Dorsolateral prefrontal cortex (tissue), 120 donors: ENCODE measurements at regions of chrX and their contacts with region 1.

Region 1: DNA sequence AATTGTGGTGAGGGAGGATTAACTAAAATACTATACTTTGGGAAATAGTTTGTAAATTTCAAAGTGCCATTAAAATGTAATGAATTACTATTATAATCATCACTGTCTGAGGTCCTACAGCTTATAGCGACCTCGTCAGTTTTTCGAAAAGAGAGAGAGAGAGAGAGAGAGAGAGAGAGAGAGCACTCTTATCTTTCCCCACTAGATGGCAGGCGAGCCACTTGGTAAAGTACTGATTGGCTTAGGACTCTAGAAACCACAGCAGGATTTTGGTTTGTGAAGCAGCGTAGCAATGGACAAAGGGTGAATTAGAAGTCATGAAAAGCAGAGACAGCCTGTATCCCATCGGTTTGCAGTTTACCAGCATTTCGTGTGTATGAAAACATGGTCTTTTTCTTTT is 52.5 kb downstream of the LINC00632 start:
- DNase-seq: peak in 4 of 10 donors; percentile 39 to 64 (median 52)
- H3K4me3 ChIP-seq: peak overlapping the region in 3 of 59 donors; percentile 8 to 26 (median 17)
- H3K27ac ChIP-seq: peak overlapping the region in 20 of 59 donors; percentile 1 to 73 (median 32)
- H3K27me3 ChIP-seq: peaks cover 0 to 67% (median 17%) of the 10 kb centered on the region in 45 donors
- CTCF ChIP-seq: peak; percentile 17 to 83 (median 70)

Region 2: GRCh38 chrX:140848800-140849199 is 86.7 kb after region 1 on chrX:
- intact Hi-C with region 1: no loop called
- DNase-seq: no peak
- H3K4me3 ChIP-seq: no peak overlapping the region
- H3K27ac ChIP-seq: no peak overlapping the region
- H3K27me3 ChIP-seq: peaks cover 0 to 54% (median 15%) of the 10 kb centered on the region in 45 donors
- CTCF ChIP-seq: no peak

Region 3: GRCh38 chrX:141176586-141177451 is 414.8 kb after region 1 on chrX and contains the start of gene LDOC1:
- intact Hi-C with region 1: loop called in 1 of 2 experiments (anchors 10 kb)
- DNase-seq: peak; percentile 71 to 86 (median 80)
- H3K4me3 ChIP-seq: peak within 1 kb of the TSS; percentile 41 to 83 (median 68)
- H3K27ac ChIP-seq: peak within 1 kb of the TSS in 53 of 59 donors; percentile 28 to 87 (median 76)
- H3K27me3 ChIP-seq: peaks cover 0 to 32% (median 0%) of the 10 kb centered on the region in 45 donors
- CTCF ChIP-seq: peak in 1 of 56 donors; percentile 32
- total RNA-seq, gene LDOC1: 36.5 to 134 (median 94.8) TPM